Activated CD8-positive, alpha-beta memory T cell treated with anti-CD3 and anti-CD28 coated beads, Interleukin-2, amount 10 ng/mL, durations not matched to agents 7 days and 5 days (primary cell): ENCODE measurements at regions of chr15 and their contacts with region 1.

Region 1: GRCh38 chr15:52208306-52208946 is 17.2 kb upstream of the GNB5 start:
- DNase-seq: peak; percentile 89
- ATAC-seq: peak; percentile 98
- H3K4me3 Mint-ChIP-seq: no peak overlapping the region
- H3K27ac Mint-ChIP-seq: peak overlapping the region; percentile 28
- H3K4me1 Mint-ChIP-seq: peaks cover 10% of the 10 kb centered on the region
- H3K27me3 Mint-ChIP-seq: no peaks in the 10 kb centered on the region

Region 2: GRCh38 chr15:52163321-52164190 is 44.9 kb before region 1 on chr15:
- CTCF ChIA-PET with region 1: interaction called, 12 read pairs
- DNase-seq: no peak
- ATAC-seq: no peak
- H3K4me3 Mint-ChIP-seq: no peak overlapping the region
- H3K27ac Mint-ChIP-seq: no peak overlapping the region
- H3K4me1 Mint-ChIP-seq: peaks cover 16% of the 10 kb centered on the region
- H3K27me3 Mint-ChIP-seq: no peaks in the 10 kb centered on the region

Region 3: DNA sequence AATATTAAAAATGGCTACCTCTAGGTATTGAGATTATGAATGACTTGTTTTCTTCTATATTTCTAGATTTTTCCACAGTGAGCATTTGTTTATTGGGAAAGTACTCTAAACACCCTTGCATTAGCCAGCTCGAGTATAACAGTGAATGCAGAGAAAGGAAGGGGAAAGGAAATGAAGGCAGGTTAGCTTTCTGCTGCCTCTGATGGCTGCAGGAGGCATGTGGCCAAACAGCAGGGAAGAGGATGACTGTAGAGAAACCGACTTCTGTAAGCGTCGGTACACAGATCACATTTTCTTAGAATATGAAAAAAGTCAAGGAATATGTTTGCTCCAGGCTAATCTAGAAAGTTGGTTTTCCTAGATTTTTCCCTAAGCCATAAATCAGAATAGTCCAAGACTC is 37.0 kb before region 1 on chr15:
- CTCF ChIA-PET with region 1: interaction called, 37 read pairs
- DNase-seq: peak; percentile 52
- ATAC-seq: peak; percentile 85
- H3K4me3 Mint-ChIP-seq: no peak overlapping the region
- H3K27ac Mint-ChIP-seq: no peak overlapping the region
- H3K4me1 Mint-ChIP-seq: peaks cover 17% of the 10 kb centered on the region
- H3K27me3 Mint-ChIP-seq: no peaks in the 10 kb centered on the region

Region 4: GRCh38 chr15:52179278-52180195 is 28.9 kb before region 1 on chr15:
- CTCF ChIA-PET with region 1: interaction called, 37 read pairs
- DNase-seq: peak; percentile 94
- ATAC-seq: peak; percentile 88
- H3K4me3 Mint-ChIP-seq: peak overlapping the region; percentile 82
- H3K27ac Mint-ChIP-seq: peak overlapping the region; percentile 96
- H3K4me1 Mint-ChIP-seq: peaks cover 36% of the 10 kb centered on the region
- H3K27me3 Mint-ChIP-seq: no peaks in the 10 kb centered on the region

Region 5: GRCh38 chr15:52191207-52191606 is 17.2 kb before region 1 on chr15 and contains the start of gene GNB5:
- CTCF ChIA-PET with region 1: interaction called, 27 read pairs
- DNase-seq: no peak
- ATAC-seq: no peak
- H3K4me3 Mint-ChIP-seq: no peak within 1 kb of the TSS
- H3K27ac Mint-ChIP-seq: no peak within 1 kb of the TSS
- H3K4me1 Mint-ChIP-seq: no peaks in the 10 kb centered on the region
- H3K27me3 Mint-ChIP-seq: no peaks in the 10 kb centered on the region
- total RNA-seq, gene GNB5: 27.9 to 39.5 TPM

Region 6: DNA sequence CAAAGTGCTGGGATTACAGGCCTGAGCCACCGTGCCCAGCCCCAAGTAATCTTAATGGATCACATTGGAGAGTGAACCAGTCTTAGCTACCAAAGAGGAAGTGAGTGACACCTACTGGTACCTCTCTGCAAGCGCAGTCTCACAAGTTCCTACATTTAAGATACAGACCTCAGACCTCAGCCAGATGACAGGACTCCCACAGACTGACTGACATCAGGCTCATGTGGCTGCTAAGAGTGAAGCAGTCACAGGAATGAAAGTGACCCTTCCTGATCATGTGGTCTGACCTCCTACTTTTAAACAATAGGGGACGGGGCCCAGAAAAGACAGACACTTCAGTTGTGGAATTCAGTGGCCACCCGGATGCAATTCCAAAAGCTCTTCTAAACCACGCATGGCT is 19.0 kb after region 1 on chr15:
- CTCF ChIA-PET with region 1: interaction called, 69 read pairs
- DNase-seq: peak; percentile 90
- ATAC-seq: peak; percentile 98
- H3K4me3 Mint-ChIP-seq: no peak overlapping the region
- H3K27ac Mint-ChIP-seq: peak overlapping the region; percentile 40
- H3K4me1 Mint-ChIP-seq: peaks cover 19% of the 10 kb centered on the region
- H3K27me3 Mint-ChIP-seq: no peaks in the 10 kb centered on the region